Prostate gland (tissue), 2 donors: ENCODE measurements at regions of chr10 and their contacts with region 1.

Region 1: DNA sequence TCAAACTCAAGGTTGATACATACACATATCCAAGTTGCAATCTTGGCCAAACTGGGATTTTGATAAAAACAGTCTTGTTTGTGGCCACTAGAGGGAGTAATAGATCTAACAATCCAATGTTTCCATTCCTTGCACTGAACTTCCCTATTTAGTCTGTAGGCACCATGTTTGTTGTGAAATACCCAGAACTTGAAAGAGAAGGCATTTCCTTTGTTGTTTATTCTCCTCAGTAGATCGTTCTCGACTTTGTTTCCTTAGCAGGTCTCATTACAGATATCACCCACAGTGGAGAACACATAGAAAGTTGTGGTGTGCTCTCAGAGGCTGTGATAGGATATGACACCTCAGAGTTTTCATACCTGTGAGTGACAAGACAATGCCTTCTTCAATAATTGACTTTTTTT is 70.3 kb upstream of the MXI1 start:
- DNase-seq: peak; percentile 14
- H3K4me3 ChIP-seq: no peak overlapping the region
- H3K27ac ChIP-seq: peak overlapping the region in 1 of 2 donors; percentile 29
- H3K4me1 ChIP-seq: no peaks in the 10 kb centered on the region
- H3K27me3 ChIP-seq: no peaks in the 10 kb centered on the region
- CTCF ChIP-seq: peak; percentile 70 to 93 (median 90)
- POLR2A ChIP-seq: no peak

Region 2: GRCh38 chr10:109883859-109884771 is 253.0 kb before region 1 on chr10:
- intact Hi-C with region 1: loop called (anchors 5 kb)
- DNase-seq: peak; percentile 41
- H3K4me3 ChIP-seq: no peak overlapping the region
- H3K27ac ChIP-seq: peak overlapping the region; percentile 14 to 42
- H3K4me1 ChIP-seq: no peaks in the 10 kb centered on the region
- H3K27me3 ChIP-seq: no peaks in the 10 kb centered on the region
- CTCF ChIP-seq: peak; percentile 84 to 93 (median 88)
- POLR2A ChIP-seq: no peak

Region 3: GRCh38 chr10:110210674-110211464 is 73.7 kb after region 1 on chr10:
- intact Hi-C with region 1: loop called (anchors 5 kb)
- DNase-seq: peak; percentile 97
- H3K4me3 ChIP-seq: peak overlapping the region; percentile 69 to 70
- H3K27ac ChIP-seq: peak overlapping the region; percentile 81 to 91
- H3K4me1 ChIP-seq: peaks cover 3% of the 10 kb centered on the region
- H3K27me3 ChIP-seq: no peaks in the 10 kb centered on the region
- CTCF ChIP-seq: no peak
- POLR2A ChIP-seq: peak; percentile 67

Region 4: GRCh38 chr10:110225756-110226542 is 88.8 kb after region 1 on chr10:
- intact Hi-C with region 1: loop called (anchors 5 kb)
- DNase-seq: peak; percentile 90
- H3K4me3 ChIP-seq: peak overlapping the region; percentile 78 to 89
- H3K27ac ChIP-seq: peak overlapping the region; percentile 96
- H3K4me1 ChIP-seq: no peaks in the 10 kb centered on the region
- H3K27me3 ChIP-seq: no peaks in the 10 kb centered on the region
- CTCF ChIP-seq: peak; percentile 56 to 83 (median 75)
- POLR2A ChIP-seq: peak; percentile 36

Region 5: GRCh38 chr10:110279407-110279986 is 142.4 kb after region 1 on chr10:
- intact Hi-C with region 1: loop called (anchors 1 kb)
- DNase-seq: peak; percentile 62
- H3K4me3 ChIP-seq: no peak overlapping the region
- H3K27ac ChIP-seq: peak overlapping the region in 1 of 2 donors; percentile 36
- H3K4me1 ChIP-seq: no peaks in the 10 kb centered on the region
- H3K27me3 ChIP-seq: no peaks in the 10 kb centered on the region
- CTCF ChIP-seq: peak; percentile 52 to 87 (median 80)
- POLR2A ChIP-seq: no peak

Region 6: GRCh38 chr10:110304780-110305421 is 167.8 kb after region 1 on chr10 and contains the start of gene SMNDC1:
- intact Hi-C with region 1: loop called (anchors 5 kb)
- DNase-seq: peak; percentile 99
- H3K4me3 ChIP-seq: peak within 1 kb of the TSS; percentile 60 to 95
- H3K27ac ChIP-seq: peak within 1 kb of the TSS; percentile 88 to 89
- H3K4me1 ChIP-seq: peaks cover 6% of the 10 kb centered on the region
- H3K27me3 ChIP-seq: no peaks in the 10 kb centered on the region
- CTCF ChIP-seq: no peak
- POLR2A ChIP-seq: peak; percentile 73
- total RNA-seq, gene SMNDC1: 8.0 to 11.0 TPM

Region 7: DNA sequence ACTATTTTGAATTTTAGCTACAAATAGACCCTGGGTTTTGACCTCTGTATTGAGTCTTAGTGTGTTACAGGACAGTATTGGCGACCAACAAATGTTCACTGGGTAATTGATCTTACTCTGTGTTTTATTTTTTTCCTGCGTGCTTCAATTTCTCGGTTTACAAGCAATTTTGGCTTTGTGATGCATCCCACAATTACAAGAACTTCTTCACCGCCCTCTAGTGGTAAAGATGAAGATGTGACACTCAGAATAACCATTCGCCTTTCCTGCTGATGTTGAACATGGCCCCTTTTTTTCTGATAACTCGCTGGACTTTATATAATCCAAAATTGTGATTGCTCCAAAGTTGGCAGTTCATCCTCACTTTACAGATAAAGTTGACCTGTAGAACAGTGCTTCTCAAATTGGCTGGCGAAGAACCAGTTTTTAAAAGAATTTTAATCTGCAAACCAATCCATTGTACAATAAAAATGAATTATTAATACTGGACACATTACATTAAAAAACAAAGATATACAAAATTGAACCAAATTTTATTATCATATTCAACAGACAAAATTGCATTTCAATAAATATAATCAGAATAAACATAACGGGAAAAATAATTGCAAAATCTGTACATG is 410.1 kb after region 1 on chr10:
- intact Hi-C with region 1: loop called (anchors 5 kb)
- DNase-seq: no peak
- H3K4me3 ChIP-seq: no peak overlapping the region
- H3K27ac ChIP-seq: no peak overlapping the region
- H3K4me1 ChIP-seq: no peaks in the 10 kb centered on the region
- H3K27me3 ChIP-seq: no peaks in the 10 kb centered on the region
- CTCF ChIP-seq: peak; percentile 33 to 78 (median 78)
- POLR2A ChIP-seq: no peak